ENCODE measurements at regions of chr20 and their contacts with region 1.

Region 1: GRCh38 chr20:44521484-44522481 is at the start of gene SERINC3:
- DNase-seq: peak; percentile 97 to 98 (median 98)
- H3K4me3 ChIP-seq: peak within 1 kb of the TSS; percentile 62 to 78
- H3K4me3 Mint-ChIP-seq: peak within 1 kb of the TSS; percentile 81 to 94 (median 90)
- H3K27ac ChIP-seq: peak within 1 kb of the TSS; percentile 99
- H3K27ac Mint-ChIP-seq: peak within 1 kb of the TSS; percentile 82 to 99 (median 95)
- H3K4me1 ChIP-seq: peaks cover 54% of the 10 kb centered on the region
- H3K4me1 Mint-ChIP-seq: peaks cover 29 to 68% (median 54%) of the 10 kb centered on the region in 4 donors
- H3K27me3 ChIP-seq: no peaks in the 10 kb centered on the region
- H3K27me3 Mint-ChIP-seq: no peaks in the 10 kb centered on the region
- total RNA-seq, gene SERINC3: 84.8 to 90.1 TPM

Region 2: GRCh38 chr20:44475694-44476560 is 45.9 kb before region 1 on chr20 and contains the start of gene TTPAL:
- CTCF ChIA-PET with region 1: interaction called, 3 read pairs
- POLR2A ChIA-PET with region 1: interaction called, 27 read pairs
- intact Hi-C with region 1: loop called (anchors 2 kb)
- DNase-seq: peak; percentile 85 to 89 (median 89)
- H3K4me3 ChIP-seq: peak within 1 kb of the TSS; percentile 53 to 72
- H3K4me3 Mint-ChIP-seq: peak within 1 kb of the TSS; percentile 88 to 94 (median 92)
- H3K27ac ChIP-seq: peak within 1 kb of the TSS; percentile 95
- H3K27ac Mint-ChIP-seq: peak within 1 kb of the TSS; percentile 92 to 99 (median 96)
- H3K4me1 ChIP-seq: peaks cover 17% of the 10 kb centered on the region
- H3K4me1 Mint-ChIP-seq: peaks cover 13 to 32% (median 25%) of the 10 kb centered on the region in 4 donors
- H3K27me3 ChIP-seq: no peaks in the 10 kb centered on the region
- H3K27me3 Mint-ChIP-seq: no peaks in the 10 kb centered on the region
- total RNA-seq, gene TTPAL: 17.5 to 18.9 TPM

Region 3: GRCh38 chr20:44532259-44532980 is 10.6 kb after region 1 on chr20:
- CTCF ChIA-PET with region 1: interaction called, 3 read pairs
- POLR2A ChIA-PET with region 1: interaction called, 5 read pairs
- intact Hi-C with region 1: loop called (anchors 1 kb)
- DNase-seq: no peak
- H3K4me3 ChIP-seq: peak overlapping the region; percentile 8 to 58
- H3K4me3 Mint-ChIP-seq: no peak overlapping the region
- H3K27ac ChIP-seq: peak overlapping the region; percentile 7
- H3K27ac Mint-ChIP-seq: no peak overlapping the region
- H3K4me1 ChIP-seq: peaks cover 32% of the 10 kb centered on the region
- H3K4me1 Mint-ChIP-seq: peaks cover 0 to 5% (median 4%) of the 10 kb centered on the region in 4 donors
- H3K27me3 ChIP-seq: no peaks in the 10 kb centered on the region
- H3K27me3 Mint-ChIP-seq: no peaks in the 10 kb centered on the region

Region 4: DNA sequence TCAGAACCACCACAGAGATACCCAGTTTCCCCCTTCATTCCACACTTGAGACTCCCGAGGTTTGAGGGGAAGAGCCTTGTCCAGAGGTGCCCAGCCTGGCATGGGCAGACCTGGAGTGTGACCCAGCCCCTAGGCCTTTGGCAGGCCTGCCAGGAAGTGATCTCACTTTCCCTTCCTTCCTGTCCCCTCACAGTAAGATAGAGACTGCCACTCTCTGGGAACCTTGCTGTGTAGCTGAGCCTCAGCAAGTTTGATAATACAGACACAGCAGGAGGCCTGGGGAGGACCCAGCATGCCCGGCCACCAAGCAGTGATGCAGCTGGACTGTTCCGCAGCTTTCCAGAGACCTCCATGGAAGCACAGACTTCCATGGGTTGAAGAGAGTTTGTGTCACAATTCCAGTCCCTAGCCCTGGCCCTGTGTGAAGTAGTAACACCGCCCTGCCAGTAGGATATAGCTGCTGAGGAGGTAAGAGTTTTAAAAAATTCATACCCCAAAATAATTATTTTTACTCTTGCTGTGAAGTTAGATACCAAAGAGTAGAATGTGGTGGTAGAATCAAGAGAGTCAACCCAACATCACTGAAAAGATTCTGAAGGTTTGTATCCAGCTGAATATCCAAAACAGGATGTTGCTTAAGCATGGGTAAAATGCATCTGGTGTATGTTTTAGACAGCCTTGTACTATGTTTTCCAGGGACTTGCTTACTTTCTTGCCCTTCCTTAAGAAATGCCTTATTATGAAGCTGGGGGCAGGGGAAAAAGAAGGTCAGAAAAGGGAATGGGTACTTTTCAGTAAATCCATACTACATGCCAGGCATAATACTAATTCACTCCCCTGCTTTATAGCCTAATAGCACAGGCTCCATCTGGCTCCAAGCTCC is 76.9 kb after region 1 on chr20:
- CTCF ChIA-PET with region 1: no interaction called
- POLR2A ChIA-PET with region 1: no interaction called
- intact Hi-C with region 1: no loop called
- DNase-seq: no peak
- H3K4me3 ChIP-seq: no peak overlapping the region
- H3K4me3 Mint-ChIP-seq: no peak overlapping the region
- H3K27ac ChIP-seq: no peak overlapping the region
- H3K27ac Mint-ChIP-seq: peak overlapping the region in 4 of 7 donors; percentile 14 to 83 (median 50)
- H3K4me1 ChIP-seq: peaks cover 7% of the 10 kb centered on the region
- H3K4me1 Mint-ChIP-seq: peaks cover 6 to 9% (median 9%) of the 10 kb centered on the region in 4 donors
- H3K27me3 ChIP-seq: no peaks in the 10 kb centered on the region
- H3K27me3 Mint-ChIP-seq: no peaks in the 10 kb centered on the region

Region 5: GRCh38 chr20:44609511-44610312 is 87.9 kb after region 1 on chr20:
- CTCF ChIA-PET with region 1: no interaction called
- POLR2A ChIA-PET with region 1: no interaction called
- intact Hi-C with region 1: loop called (anchors 5 kb)
- DNase-seq: peak; percentile 65 to 80 (median 74)
- H3K4me3 ChIP-seq: no peak overlapping the region
- H3K4me3 Mint-ChIP-seq: peak overlapping the region in 6 of 8 donors; percentile 62 to 77 (median 66)
- H3K27ac ChIP-seq: peak overlapping the region; percentile 23
- H3K27ac Mint-ChIP-seq: peak overlapping the region; percentile 17 to 98 (median 85)
- H3K4me1 ChIP-seq: peaks cover 12% of the 10 kb centered on the region
- H3K4me1 Mint-ChIP-seq: peaks cover 5 to 19% (median 12%) of the 10 kb centered on the region in 4 donors
- H3K27me3 ChIP-seq: no peaks in the 10 kb centered on the region
- H3K27me3 Mint-ChIP-seq: no peaks in the 10 kb centered on the region

Region 6: DNA sequence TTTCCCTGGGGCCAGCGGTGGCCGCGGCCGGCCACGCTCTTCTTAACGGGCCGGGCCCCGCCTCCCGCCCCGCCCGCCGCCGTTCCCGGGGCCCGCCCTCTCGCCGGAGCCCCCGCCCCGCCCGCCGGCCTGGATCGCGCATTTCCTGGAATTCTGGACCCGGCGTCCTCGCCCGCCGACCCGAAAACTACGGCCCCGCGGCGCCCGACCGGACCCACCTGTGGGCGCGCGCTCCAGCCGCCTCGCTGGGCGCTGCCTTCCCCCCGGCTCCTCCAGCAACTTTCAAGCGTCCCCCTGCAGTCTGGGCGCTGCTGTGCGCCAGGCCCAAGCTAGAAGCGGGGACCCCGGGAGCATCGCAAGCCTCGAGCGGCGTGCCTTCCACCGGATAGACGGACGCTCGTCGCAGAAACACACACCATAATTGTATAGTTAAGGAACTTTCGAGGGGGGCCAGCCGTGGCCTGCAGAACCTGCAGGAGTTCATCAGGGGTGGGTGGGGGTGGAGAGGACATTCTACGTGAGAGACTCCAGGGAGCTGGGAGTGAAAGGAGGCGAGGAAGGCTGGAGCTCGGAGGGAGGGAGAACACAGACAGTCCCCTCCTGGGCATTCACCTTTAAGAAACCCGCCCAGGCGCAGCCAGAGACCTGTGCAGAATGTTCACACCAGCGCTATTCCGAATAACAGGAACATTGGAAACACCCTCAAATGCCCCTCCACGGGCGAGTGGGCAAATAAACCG is 130.1 kb after region 1 on chr20 and contains the start of gene ADA:
- CTCF ChIA-PET with region 1: no interaction called
- POLR2A ChIA-PET with region 1: interaction called, 15 read pairs
- intact Hi-C with region 1: loop called (anchors 5 kb)
- DNase-seq: peak; percentile 39 to 57 (median 43)
- H3K4me3 ChIP-seq: peak within 1 kb of the TSS; percentile 76 to 81
- H3K4me3 Mint-ChIP-seq: peak within 1 kb of the TSS; percentile 91 to 98 (median 93)
- H3K27ac ChIP-seq: peak within 1 kb of the TSS; percentile 72
- H3K27ac Mint-ChIP-seq: peak within 1 kb of the TSS; percentile 91 to 97 (median 95)
- H3K4me1 ChIP-seq: peaks cover 52% of the 10 kb centered on the region
- H3K4me1 Mint-ChIP-seq: peaks cover 25 to 58% (median 47%) of the 10 kb centered on the region in 4 donors
- H3K27me3 ChIP-seq: no peaks in the 10 kb centered on the region
- H3K27me3 Mint-ChIP-seq: no peaks in the 10 kb centered on the region
- total RNA-seq, gene ADA: 28.4 to 31.0 TPM

Measured in CD4-positive, alpha-beta memory T cell (primary cell).